Natural killer cell (primary cell): ENCODE measurements at regions of chr10 and their contacts with region 1.

Region 1: GRCh38 chr10:70619271-70620019 is 16.9 kb upstream of the PRF1 start:
- DNase-seq: no peak
- ATAC-seq: no peak
- H3K4me3 ChIP-seq: no peak overlapping the region
- H3K4me3 Mint-ChIP-seq: peak overlapping the region; percentile 68
- H3K27ac ChIP-seq: peak overlapping the region; percentile 76
- H3K27ac Mint-ChIP-seq: peak overlapping the region; percentile 89 to 97
- H3K4me1 ChIP-seq: peaks cover 35% of the 10 kb centered on the region
- H3K4me1 Mint-ChIP-seq: peaks cover 57 to 62% of the 10 kb centered on the region in 2 donors
- H3K27me3 ChIP-seq: no peaks in the 10 kb centered on the region
- H3K27me3 Mint-ChIP-seq: no peaks in the 10 kb centered on the region
- CTCF ChIP-seq: peak; percentile 61

Region 2: DNA sequence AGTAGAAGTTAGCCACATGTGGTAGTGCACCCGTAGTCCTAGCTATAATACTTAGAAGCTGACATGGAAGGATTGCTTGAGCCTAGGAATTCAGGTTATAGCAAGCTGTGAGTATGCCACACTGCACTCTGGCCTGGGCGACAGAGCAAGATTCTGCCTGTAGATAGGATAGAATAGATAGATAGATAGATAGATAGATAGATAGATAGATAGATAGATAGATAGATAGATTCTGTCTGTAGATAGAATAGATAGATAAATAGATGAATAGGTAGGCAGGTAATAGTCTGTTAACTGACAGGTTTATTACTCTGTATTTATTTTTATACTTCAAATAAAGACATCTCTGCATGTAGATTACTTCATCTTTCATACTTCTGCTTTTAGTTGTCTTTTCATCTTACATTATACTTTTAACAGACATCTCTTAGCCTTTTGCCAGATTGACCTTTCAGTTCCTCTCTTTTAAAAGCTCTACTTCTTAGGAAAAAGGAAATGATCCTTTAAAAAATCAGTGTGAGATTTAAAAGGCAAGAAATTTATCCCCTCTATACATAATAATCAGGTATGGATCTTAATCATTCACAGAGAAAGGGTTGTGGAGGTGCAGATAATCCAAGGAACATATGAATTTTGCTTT is 1866.6 kb before region 1 on chr10:
- intact Hi-C with region 1: no loop called
- DNase-seq: no peak
- ATAC-seq: no peak
- H3K4me3 ChIP-seq: no peak overlapping the region
- H3K4me3 Mint-ChIP-seq: no peak overlapping the region
- H3K27ac ChIP-seq: no peak overlapping the region
- H3K27ac Mint-ChIP-seq: peak overlapping the region in 1 of 2 donors; percentile 7
- H3K4me1 ChIP-seq: no peaks in the 10 kb centered on the region
- H3K4me1 Mint-ChIP-seq: peaks cover 0 to 5% of the 10 kb centered on the region in 2 donors
- H3K27me3 ChIP-seq: no peaks in the 10 kb centered on the region
- H3K27me3 Mint-ChIP-seq: no peaks in the 10 kb centered on the region
- CTCF ChIP-seq: no peak

Region 3: GRCh38 chr10:70169649-70170364 is 449.6 kb before region 1 on chr10:
- intact Hi-C with region 1: loop called (anchors 10 kb)
- DNase-seq: peak in 1 of 2 donors; percentile 42
- ATAC-seq: peak; percentile 24 to 37 (median 25)
- H3K4me3 ChIP-seq: peak overlapping the region; percentile 86
- H3K4me3 Mint-ChIP-seq: peak overlapping the region; percentile 99
- H3K27ac ChIP-seq: peak overlapping the region; percentile 92
- H3K27ac Mint-ChIP-seq: peak overlapping the region; percentile 97 to 98
- H3K4me1 ChIP-seq: peaks cover 53% of the 10 kb centered on the region
- H3K4me1 Mint-ChIP-seq: peaks cover 54 to 56% of the 10 kb centered on the region in 2 donors
- H3K27me3 ChIP-seq: no peaks in the 10 kb centered on the region
- H3K27me3 Mint-ChIP-seq: no peaks in the 10 kb centered on the region
- CTCF ChIP-seq: no peak

Region 4: DNA sequence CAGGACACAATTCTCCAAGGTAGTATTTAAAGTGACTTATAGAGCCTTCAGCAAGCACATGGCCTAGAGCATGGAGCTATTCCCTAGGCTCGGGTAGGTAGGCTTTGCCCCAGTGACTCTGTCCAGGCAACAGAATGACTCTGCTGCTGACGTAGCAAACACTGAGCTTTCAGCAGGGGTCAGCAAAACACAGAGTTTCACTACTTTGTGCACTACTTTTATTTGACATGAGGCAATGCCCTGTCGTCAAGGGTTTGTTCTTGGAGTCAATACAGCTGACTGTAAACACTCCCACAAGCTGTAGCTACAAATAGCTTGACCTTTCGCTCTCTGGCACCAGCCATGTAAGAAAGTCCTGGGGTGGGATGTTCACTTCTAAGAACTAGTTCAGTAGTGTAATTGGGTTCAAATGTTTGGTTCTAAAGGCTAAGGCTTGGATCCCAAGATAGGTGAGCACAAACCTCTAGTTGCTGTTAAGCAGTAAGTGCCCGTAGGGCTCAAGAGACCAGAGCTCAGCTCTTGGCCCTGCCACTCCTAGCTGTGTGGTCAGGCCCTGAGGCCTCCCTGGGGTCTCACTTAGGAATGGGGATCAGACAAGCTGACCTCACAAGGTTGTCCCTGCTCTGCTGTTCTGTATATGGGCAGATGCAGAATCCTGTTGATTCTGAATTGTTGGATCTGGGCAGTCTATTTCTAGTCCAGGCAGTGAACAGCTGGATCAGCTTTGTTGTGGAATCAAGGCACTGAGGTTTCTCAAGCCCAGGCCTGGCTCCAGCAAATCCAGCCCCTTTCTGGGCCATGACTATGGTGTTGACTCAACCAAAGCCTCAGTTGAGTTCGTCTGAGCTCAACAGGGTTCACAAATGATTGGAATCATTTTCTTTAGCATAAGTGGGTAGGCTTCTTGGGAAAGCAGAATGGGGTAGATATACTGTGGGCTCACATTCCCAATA is 188.7 kb before region 1 on chr10:
- intact Hi-C with region 1: no loop called
- DNase-seq: peak in 1 of 2 donors; percentile 10
- ATAC-seq: no peak
- H3K4me3 ChIP-seq: no peak overlapping the region
- H3K4me3 Mint-ChIP-seq: no peak overlapping the region
- H3K27ac ChIP-seq: no peak overlapping the region
- H3K27ac Mint-ChIP-seq: no peak overlapping the region
- H3K4me1 ChIP-seq: peaks cover 11% of the 10 kb centered on the region
- H3K4me1 Mint-ChIP-seq: peaks cover 12 to 24% of the 10 kb centered on the region in 2 donors
- H3K27me3 ChIP-seq: no peaks in the 10 kb centered on the region
- H3K27me3 Mint-ChIP-seq: no peaks in the 10 kb centered on the region
- CTCF ChIP-seq: no peak

Region 5: DNA sequence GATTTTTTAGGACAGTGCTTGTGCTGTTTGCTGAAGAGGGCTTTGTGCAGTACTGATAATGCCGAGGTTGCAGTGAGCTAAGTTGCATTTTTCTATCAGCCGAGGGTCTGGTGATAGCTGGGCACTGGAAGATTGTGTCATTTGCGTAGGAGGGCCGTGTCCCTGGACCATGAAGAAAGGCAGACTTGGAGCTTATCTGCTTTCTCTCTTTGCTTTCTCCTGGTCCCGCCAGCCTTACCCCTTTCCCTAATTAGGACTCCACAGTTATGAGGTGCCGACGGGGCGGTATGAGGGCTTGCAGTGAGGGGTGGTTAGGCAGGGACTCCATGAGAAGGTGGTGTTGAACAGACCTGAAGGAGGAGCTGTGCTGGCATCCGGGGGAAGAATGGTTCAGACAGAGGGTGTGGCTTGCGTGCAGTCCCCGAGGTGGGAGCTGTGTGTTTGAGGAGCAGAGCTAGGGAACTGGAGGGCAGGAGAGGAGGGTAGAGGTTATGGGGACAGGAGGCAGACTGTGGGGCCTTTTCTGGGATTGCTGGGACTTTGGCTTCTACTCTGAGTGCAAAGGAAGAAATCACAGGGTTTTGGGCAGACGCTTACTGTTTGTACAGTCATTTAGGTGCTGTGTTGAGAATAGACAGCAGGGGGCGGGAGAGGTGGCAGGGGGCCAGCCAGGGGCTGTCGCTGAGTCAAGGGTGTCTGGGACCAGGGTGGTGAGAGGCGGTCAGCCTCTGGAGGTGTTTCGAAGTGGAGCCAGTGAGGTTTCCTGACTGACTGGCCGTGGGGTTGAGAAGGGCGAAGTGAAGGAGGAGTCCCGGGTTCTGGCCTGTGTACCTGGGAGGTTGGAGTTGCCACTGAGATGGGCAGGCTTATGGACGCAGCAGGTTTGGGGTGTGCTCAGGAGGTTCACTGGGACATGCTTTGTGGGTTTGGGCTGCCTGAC is 60.3 kb before region 1 on chr10:
- intact Hi-C with region 1: loop called (anchors 1 kb)
- DNase-seq: peak; percentile 71 to 82
- ATAC-seq: peak; percentile 90 to 94 (median 93)
- H3K4me3 ChIP-seq: peak overlapping the region; percentile 35
- H3K4me3 Mint-ChIP-seq: peak overlapping the region; percentile 85
- H3K27ac ChIP-seq: peak overlapping the region; percentile 43
- H3K27ac Mint-ChIP-seq: peak overlapping the region; percentile 76 to 87
- H3K4me1 ChIP-seq: peaks cover 51% of the 10 kb centered on the region
- H3K4me1 Mint-ChIP-seq: peaks cover 38 to 56% of the 10 kb centered on the region in 2 donors
- H3K27me3 ChIP-seq: no peaks in the 10 kb centered on the region
- H3K27me3 Mint-ChIP-seq: no peaks in the 10 kb centered on the region
- CTCF ChIP-seq: peak; percentile 84

Region 6: GRCh38 chr10:70575874-70576802 is 43.3 kb before region 1 on chr10:
- intact Hi-C with region 1: loop called (anchors 1 kb)
- DNase-seq: peak; percentile 48 to 70
- ATAC-seq: peak; percentile 58 to 76 (median 73)
- H3K4me3 ChIP-seq: peak overlapping the region; percentile 18
- H3K4me3 Mint-ChIP-seq: peak overlapping the region; percentile 91
- H3K27ac ChIP-seq: peak overlapping the region; percentile 66
- H3K27ac Mint-ChIP-seq: peak overlapping the region; percentile 89 to 92
- H3K4me1 ChIP-seq: peaks cover 82% of the 10 kb centered on the region
- H3K4me1 Mint-ChIP-seq: peaks cover 83 to 84% of the 10 kb centered on the region in 2 donors
- H3K27me3 ChIP-seq: no peaks in the 10 kb centered on the region
- H3K27me3 Mint-ChIP-seq: no peaks in the 10 kb centered on the region
- CTCF ChIP-seq: no peak

Region 7: DNA sequence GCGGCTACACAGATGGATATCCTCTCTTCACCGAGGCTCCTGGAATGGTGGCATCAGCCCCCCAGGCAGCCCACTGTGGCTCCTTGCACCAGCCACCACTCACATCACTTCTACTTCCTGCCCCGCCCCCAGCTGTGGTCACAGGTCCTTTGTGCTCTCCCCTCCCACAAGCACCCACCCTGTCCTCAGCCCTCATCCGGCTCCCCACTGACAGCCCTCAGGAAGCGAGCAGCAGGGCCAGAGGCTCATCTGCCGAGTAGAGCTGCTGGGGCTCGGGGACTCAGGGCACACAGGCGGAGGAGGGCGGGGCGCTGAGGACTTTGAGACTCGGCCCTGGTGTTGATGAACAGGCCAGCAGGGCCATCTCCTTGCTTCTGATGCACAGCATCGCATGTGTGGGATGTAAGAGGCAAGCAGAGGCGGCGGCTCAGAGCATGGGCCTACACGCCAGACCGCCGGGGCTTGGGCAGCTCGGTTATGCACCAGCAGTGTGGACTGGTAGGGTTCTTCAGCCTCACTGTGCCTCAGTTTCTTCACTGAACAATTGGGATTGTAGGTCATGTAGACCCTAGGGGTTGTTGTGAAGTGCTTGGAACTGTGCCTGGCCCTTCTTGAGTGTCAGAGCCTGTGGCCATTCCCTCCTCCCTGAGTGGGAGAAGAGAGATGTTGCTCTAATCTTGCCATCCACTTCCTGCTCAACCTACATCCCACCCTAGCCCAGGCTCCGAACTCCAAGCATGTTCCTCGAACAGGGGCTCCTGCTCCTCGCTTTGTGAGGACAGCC is 16.6 kb before region 1 on chr10 and contains the start of gene PRF1:
- intact Hi-C with region 1: loop called (anchors 2 kb)
- DNase-seq: peak; percentile 88
- ATAC-seq: peak; percentile 54 to 79 (median 69)
- H3K4me3 ChIP-seq: peak within 1 kb of the TSS; percentile 88
- H3K4me3 Mint-ChIP-seq: peak within 1 kb of the TSS; percentile 100
- H3K27ac ChIP-seq: peak within 1 kb of the TSS; percentile 93
- H3K27ac Mint-ChIP-seq: peak within 1 kb of the TSS; percentile 95 to 97
- H3K4me1 ChIP-seq: peaks cover 67% of the 10 kb centered on the region
- H3K4me1 Mint-ChIP-seq: peaks cover 67 to 86% of the 10 kb centered on the region in 2 donors
- H3K27me3 ChIP-seq: no peaks in the 10 kb centered on the region
- H3K27me3 Mint-ChIP-seq: no peaks in the 10 kb centered on the region
- CTCF ChIP-seq: no peak
- total RNA-seq, gene PRF1: 1,641 to 2,133 (median 1,982) TPM

Region 8: GRCh38 chr10:70758757-70759514 is 139.5 kb after region 1 on chr10:
- intact Hi-C with region 1: loop called (anchors 5 kb)
- DNase-seq: peak; percentile 63 to 82
- ATAC-seq: peak; percentile 40 to 77 (median 68)
- H3K4me3 ChIP-seq: no peak overlapping the region
- H3K4me3 Mint-ChIP-seq: no peak overlapping the region
- H3K27ac ChIP-seq: no peak overlapping the region
- H3K27ac Mint-ChIP-seq: peak overlapping the region in 1 of 2 donors; percentile 60
- H3K4me1 ChIP-seq: peaks cover 4% of the 10 kb centered on the region
- H3K4me1 Mint-ChIP-seq: peaks cover 15 to 16% of the 10 kb centered on the region in 2 donors
- H3K27me3 ChIP-seq: no peaks in the 10 kb centered on the region
- H3K27me3 Mint-ChIP-seq: no peaks in the 10 kb centered on the region
- CTCF ChIP-seq: peak; percentile 94